ENCODE measurements at regions of chr2 and their contacts with region 1.

Region 1: DNA sequence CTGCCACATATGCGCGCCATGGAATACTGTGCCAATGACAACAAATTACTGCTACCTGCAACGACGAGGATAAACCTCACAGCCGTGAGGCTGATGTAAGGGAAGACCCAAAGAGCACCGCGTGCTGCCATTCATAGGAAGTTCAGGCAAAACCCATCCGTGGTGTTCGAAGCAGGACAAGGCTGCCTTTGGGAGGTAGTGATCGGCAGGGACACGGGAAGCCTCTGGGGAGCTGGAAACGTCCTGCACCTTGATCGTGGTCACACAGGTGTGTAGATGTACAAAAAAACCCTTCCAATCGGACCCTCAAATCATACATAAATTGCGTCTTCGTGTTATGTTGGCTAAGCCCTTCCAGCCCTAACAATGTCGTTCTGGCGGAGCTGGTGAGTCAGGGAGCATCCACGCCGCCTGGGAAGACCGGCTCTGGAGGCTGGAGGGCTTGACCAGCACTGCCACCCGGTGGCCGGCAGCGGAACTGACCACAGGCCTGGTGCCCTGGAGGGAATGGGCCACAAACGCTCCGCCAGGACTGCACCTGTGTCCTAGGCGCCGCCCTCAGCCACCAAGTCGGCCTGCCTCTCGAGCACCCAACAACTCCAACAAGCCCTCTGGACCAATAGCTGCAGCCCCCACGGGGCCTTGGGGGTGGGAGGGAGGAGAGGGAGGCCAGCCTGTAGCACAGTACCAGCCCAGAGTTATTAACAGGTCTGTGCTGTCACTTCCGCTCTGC is 4.1 kb upstream of the NEURL3 start:
- DNase-seq: peak; percentile 69
- ATAC-seq: peak; percentile 36
- H3K4me3 Mint-ChIP-seq: no peak overlapping the region
- H3K27ac Mint-ChIP-seq: peak overlapping the region; percentile 7
- H3K4me1 Mint-ChIP-seq: peaks cover 15% of the 10 kb centered on the region
- H3K27me3 Mint-ChIP-seq: peaks cover 15% of the 10 kb centered on the region

Region 2: GRCh38 chr2:96369186-96369585 is 140.1 kb before region 1 on chr2:
- CTCF ChIA-PET with region 1: interaction called, 21 read pairs
- POLR2A ChIA-PET with region 1: no interaction called
- DNase-seq: no peak
- ATAC-seq: no peak
- H3K4me3 Mint-ChIP-seq: no peak overlapping the region
- H3K27ac Mint-ChIP-seq: no peak overlapping the region
- H3K4me1 Mint-ChIP-seq: no peaks in the 10 kb centered on the region
- H3K27me3 Mint-ChIP-seq: no peaks in the 10 kb centered on the region

Region 3: DNA sequence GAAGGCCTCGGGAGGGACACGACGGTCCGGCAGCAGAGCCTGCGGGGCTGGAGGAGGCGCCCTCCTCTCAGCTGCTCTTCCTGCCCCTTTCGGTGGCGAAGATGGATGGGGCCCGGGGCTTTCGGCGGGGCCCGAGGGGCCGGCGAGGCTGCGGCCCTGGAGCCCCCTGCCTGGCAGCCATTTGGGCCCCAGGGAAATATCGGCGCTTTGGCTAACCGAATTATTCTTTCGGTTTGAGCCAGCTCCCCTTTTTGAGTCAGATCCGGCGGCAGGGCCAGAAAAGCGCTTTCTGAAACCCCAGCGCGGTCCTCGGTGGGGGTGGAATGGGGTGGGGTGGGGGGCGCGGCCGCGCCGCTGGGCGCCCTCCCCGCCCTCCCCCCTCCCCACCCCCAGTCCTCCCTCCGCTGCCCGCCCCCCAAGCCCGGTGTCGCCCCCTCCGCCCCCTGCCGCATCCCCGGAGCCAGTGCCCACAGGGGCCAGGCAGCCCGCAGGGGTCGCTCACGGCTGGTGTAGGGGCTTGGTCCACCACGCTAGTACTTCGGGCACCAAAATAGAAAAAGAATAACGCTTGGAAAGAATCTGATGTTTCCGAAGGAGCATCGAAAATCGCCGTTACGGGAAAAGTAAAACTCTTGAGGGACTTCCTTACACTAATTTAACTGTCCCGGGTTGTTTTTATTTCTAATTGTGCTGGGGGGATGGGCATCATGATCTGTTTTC is 18.2 kb after region 1 on chr2:
- CTCF ChIA-PET with region 1: interaction called, 20 read pairs
- POLR2A ChIA-PET with region 1: interaction called, 6 read pairs
- DNase-seq: peak; percentile 77
- ATAC-seq: peak; percentile 30
- H3K4me3 Mint-ChIP-seq: peak overlapping the region; percentile 69
- H3K27ac Mint-ChIP-seq: peak overlapping the region; percentile 78
- H3K4me1 Mint-ChIP-seq: peaks cover 90% of the 10 kb centered on the region
- H3K27me3 Mint-ChIP-seq: no peaks in the 10 kb centered on the region

Region 4: DNA sequence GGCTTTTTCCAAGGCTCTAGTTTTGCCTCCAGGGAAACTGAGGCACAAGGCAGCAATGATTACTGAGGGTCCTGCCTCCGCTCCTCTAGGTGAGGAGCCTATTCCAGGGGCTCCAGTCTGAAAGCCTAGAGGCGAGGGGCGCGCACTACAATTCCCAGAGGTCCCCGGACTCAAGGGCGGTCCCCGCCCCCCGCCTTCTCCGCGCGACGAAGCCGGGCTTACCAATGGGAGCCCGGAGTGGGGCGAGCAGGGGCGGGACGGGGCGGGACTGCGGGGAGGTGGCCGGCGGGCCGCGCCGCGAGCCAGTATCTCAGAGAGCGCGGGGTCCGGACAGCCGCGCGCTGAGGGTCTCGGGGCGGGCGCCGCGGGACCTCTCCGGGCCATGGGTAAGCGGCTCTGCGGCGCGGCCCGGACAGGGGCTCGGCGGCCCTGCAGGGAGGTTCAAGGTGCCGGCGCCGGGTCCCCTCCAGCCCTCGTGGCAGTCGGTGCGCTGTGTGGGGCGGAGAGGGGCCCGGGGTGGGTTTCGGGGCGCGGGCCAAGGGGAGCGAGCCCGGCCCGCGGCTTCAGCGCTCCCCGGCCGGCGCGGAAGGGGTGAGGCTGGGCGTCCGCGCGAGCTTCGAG is 27.3 kb after region 1 on chr2 and contains the start of gene ARID5A:
- CTCF ChIA-PET with region 1: interaction called, 21 read pairs
- POLR2A ChIA-PET with region 1: interaction called, 5 read pairs
- DNase-seq: peak; percentile 95
- ATAC-seq: peak; percentile 65
- H3K4me3 Mint-ChIP-seq: peak within 1 kb of the TSS; percentile 83
- H3K27ac Mint-ChIP-seq: peak within 1 kb of the TSS; percentile 82
- H3K4me1 Mint-ChIP-seq: peaks cover 63% of the 10 kb centered on the region
- H3K27me3 Mint-ChIP-seq: no peaks in the 10 kb centered on the region
- total RNA-seq, gene ARID5A: 37.7 to 40.1 TPM

Region 5: DNA sequence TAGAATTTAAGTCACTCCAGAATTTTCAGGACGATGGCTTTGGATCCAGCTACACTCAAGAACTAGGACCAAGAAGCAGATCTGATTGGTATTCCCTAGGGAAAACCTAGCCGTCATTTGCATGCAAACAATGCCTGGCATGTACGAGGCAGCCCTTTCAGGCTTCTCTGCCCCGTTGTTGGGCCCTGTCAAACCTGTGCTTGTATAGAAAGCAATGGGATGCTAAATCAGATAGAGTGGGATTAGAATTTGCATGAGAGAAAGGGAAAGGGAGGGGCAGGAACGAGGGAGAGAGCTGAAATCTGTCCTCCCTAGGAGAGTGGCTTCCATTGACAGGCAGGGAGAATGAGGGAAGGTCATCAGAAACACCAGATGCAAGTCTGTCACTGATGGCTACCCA is 55.8 kb after region 1 on chr2:
- CTCF ChIA-PET with region 1: no interaction called
- POLR2A ChIA-PET with region 1: no interaction called
- DNase-seq: no peak
- ATAC-seq: no peak
- H3K4me3 Mint-ChIP-seq: no peak overlapping the region
- H3K27ac Mint-ChIP-seq: no peak overlapping the region
- H3K4me1 Mint-ChIP-seq: no peaks in the 10 kb centered on the region
- H3K27me3 Mint-ChIP-seq: no peaks in the 10 kb centered on the region

Measured in activated CD8-positive, alpha-beta T cell treated with anti-CD3 and anti-CD28 coated beads, Interleukin-2, amount 10 ng/mL, durations not matched to agents 7 days and 5 days (primary cell).